Endothelial cell of umbilical vein (primary cell): ENCODE measurements at regions of chr19 and their contacts with region 1.

Region 1: GRCh38 chr19:1269065-1269477 is at the start of gene CIRBP:
- DNase-seq: peak; percentile 99
- H3K4me3 ChIP-seq: peak within 1 kb of the TSS; percentile 61 to 90 (median 76)
- H3K27ac ChIP-seq: peak within 1 kb of the TSS; percentile 93
- H3K4me1 ChIP-seq: peaks cover 38% of the 10 kb centered on the region
- H3K27me3 ChIP-seq: no peaks in the 10 kb centered on the region
- CTCF ChIP-seq: no peak
- POLR2A ChIP-seq: peak; percentile 99
- total RNA-seq, gene CIRBP: 225 and 229 TPM in 2 replicates

Region 2: GRCh38 chr19:1167671-1168571 is 101.2 kb before region 1 on chr19:
- CTCF ChIA-PET with region 1: no interaction called
- POLR2A ChIA-PET with region 1: no interaction called
- dilution Hi-C with region 1: no loop called
- intact Hi-C with region 1: no loop called
- DNase-seq: no peak
- H3K4me3 ChIP-seq: no peak overlapping the region
- H3K27ac ChIP-seq: no peak overlapping the region
- H3K4me1 ChIP-seq: no peaks in the 10 kb centered on the region
- H3K27me3 ChIP-seq: no peaks in the 10 kb centered on the region
- CTCF ChIP-seq: no peak
- POLR2A ChIP-seq: no peak

Region 3: DNA sequence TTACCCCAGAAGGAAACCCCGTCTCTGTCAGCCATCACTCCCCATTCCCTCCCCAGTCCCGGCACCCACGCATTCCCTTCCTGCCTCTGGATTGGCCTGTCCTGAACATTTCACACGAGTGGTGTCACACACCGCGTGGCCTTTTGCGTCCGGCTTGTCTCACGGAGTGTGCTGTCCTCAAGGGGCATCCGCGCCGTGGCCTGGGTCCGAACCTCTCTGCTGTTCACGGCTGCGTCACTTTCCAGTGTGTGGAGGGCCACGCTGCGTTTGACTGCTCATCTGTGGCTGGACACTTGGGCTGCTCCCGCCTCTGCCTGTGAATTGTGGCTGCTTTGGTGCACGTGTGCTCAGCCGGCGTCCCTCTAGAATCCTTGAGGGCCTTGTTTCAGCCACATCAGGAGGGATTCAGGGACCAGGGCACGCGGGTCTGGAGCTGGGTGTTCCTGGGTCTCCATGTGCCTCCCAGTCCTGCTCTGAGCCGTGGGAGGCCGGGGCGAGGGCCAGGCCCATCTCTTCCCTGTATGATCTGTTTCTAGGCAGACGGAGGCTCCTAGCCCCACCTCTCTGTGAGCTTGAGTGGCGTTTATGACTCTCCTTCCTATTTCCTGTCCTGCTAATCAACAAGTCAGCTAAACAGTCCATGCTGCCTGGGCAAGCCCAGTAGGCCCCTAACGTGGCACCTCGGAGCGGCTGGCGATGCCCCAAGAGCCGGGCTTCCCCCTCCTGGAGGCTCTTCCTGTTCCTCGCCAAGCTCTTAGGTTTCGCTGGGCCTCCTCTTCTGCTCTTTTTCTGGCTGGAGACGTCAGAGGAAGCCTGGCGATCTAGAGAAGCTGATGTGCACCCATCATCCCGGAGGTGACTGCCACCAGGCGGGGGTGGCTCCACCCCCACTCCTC is 55.4 kb before region 1 on chr19:
- CTCF ChIA-PET with region 1: interaction called, 8 read pairs
- POLR2A ChIA-PET with region 1: interaction called, 10 read pairs
- dilution Hi-C with region 1: no loop called
- intact Hi-C with region 1: no loop called
- DNase-seq: peak; percentile 96
- H3K4me3 ChIP-seq: no peak overlapping the region
- H3K27ac ChIP-seq: peak overlapping the region; percentile 48
- H3K4me1 ChIP-seq: peaks cover 31% of the 10 kb centered on the region
- H3K27me3 ChIP-seq: no peaks in the 10 kb centered on the region
- CTCF ChIP-seq: no peak
- POLR2A ChIP-seq: peak; percentile 27

Region 4: GRCh38 chr19:1223018-1223855 is 45.8 kb before region 1 on chr19:
- CTCF ChIA-PET with region 1: no interaction called
- POLR2A ChIA-PET with region 1: no interaction called
- dilution Hi-C with region 1: no loop called
- intact Hi-C with region 1: loop called (anchors 1 kb)
- DNase-seq: no peak
- H3K4me3 ChIP-seq: no peak overlapping the region
- H3K27ac ChIP-seq: no peak overlapping the region
- H3K4me1 ChIP-seq: no peaks in the 10 kb centered on the region
- H3K27me3 ChIP-seq: no peaks in the 10 kb centered on the region
- CTCF ChIP-seq: peak; percentile 52 to 55
- POLR2A ChIP-seq: no peak

Region 5: DNA sequence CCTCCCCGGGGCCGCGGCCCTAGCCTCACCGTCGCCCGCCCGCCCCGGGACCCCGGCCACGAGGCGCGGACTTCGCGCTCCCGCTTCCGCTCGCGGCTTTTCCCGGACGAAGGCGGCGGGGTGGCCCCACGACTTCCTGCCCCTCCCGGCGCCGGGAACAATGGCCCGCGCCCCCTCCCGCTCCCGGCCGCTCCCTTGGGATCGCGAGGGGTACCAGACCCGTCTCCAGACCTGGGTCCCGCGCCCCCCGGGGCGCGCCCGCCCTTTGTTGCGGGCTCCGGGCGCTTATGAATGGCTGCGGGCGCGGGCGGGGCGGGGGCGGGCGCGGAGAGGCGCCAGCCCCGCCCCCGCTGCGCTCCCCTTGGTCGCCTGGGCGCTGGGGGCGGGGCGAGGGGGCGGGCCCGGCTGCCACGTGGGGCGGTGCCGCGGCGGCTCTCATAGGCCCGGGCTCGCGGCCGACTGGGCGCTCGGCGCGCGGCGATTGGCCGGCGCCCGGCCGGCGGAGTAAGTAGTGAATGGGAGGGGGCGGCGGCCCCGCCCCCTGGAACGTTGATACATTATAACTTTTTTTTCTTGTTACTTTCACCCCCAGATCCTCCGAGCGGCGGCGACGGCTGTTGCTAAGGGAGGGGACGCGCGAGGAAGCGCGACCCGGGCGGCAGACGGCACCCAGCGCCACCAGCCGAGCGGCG is 19.6 kb before region 1 on chr19:
- CTCF ChIA-PET with region 1: interaction called, 1,001 read pairs
- POLR2A ChIA-PET with region 1: interaction called, 87 read pairs
- dilution Hi-C with region 1: no loop called
- intact Hi-C with region 1: loop called (anchors 1 kb)
- DNase-seq: peak; percentile 94
- H3K4me3 ChIP-seq: peak overlapping the region; percentile 57 to 85 (median 71)
- H3K27ac ChIP-seq: peak overlapping the region; percentile 99
- H3K4me1 ChIP-seq: peaks cover 24% of the 10 kb centered on the region
- H3K27me3 ChIP-seq: no peaks in the 10 kb centered on the region
- CTCF ChIP-seq: no peak
- POLR2A ChIP-seq: peak; percentile 78

Region 6: GRCh38 chr19:1255547-1256227 is 13.4 kb before region 1 on chr19:
- CTCF ChIA-PET with region 1: interaction called, 89 read pairs
- POLR2A ChIA-PET with region 1: interaction called, 34 read pairs
- dilution Hi-C with region 1: no loop called
- intact Hi-C with region 1: no loop called
- DNase-seq: no peak
- H3K4me3 ChIP-seq: no peak overlapping the region
- H3K27ac ChIP-seq: no peak overlapping the region
- H3K4me1 ChIP-seq: peaks cover 49% of the 10 kb centered on the region
- H3K27me3 ChIP-seq: no peaks in the 10 kb centered on the region
- CTCF ChIP-seq: no peak
- POLR2A ChIP-seq: no peak

Region 7: DNA sequence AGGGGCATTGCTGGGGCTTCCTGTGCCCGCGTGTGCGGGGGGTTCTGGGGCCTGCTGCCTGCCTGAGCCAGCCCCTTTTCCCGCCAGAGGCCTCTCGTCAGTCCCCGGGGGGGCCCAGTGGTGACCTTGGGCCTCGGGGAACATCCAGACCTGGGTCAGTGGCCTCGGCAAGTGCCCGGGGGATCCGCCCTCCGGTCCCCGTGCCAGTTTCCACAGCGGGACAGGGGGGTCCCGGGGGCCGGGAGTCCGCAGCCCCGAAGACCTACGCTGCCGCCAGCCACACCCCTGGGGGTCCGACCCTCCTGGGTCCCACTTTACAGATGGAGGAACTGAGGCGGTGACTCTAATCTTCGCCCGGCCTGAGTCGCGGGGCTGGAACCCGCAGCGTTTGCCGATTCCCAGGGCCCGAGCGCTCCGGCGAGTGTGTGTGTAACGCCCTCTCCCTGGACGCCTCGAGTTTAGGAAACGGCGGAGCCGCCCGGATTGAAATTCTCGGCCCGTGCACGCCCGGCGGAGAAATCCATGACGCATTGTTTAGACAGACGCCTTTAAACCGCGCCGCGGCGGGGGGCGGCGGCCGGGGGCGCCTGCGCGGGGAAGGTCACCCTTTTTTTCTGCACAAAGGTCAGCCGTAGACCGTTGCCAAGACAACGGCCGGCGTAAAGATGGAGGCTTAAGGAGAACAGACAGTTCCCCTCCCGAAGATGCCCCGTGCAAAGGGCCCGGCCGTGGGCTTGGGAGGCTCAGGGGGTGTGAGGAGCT is 55.9 kb after region 1 on chr19:
- CTCF ChIA-PET with region 1: no interaction called
- POLR2A ChIA-PET with region 1: no interaction called
- dilution Hi-C with region 1: no loop called
- intact Hi-C with region 1: no loop called
- DNase-seq: peak; percentile 59
- H3K4me3 ChIP-seq: peak overlapping the region in 2 of 3 experiments; percentile 3 to 15
- H3K27ac ChIP-seq: no peak overlapping the region
- H3K4me1 ChIP-seq: peaks cover 8% of the 10 kb centered on the region
- H3K27me3 ChIP-seq: no peaks in the 10 kb centered on the region
- CTCF ChIP-seq: no peak
- POLR2A ChIP-seq: no peak

Region 8: GRCh38 chr19:1438035-1438932 is 169.2 kb after region 1 on chr19 and contains the start of gene RPS15:
- CTCF ChIA-PET with region 1: no interaction called
- POLR2A ChIA-PET with region 1: interaction called, 10 read pairs
- dilution Hi-C with region 1: no loop called
- intact Hi-C with region 1: no loop called
- DNase-seq: peak; percentile 98
- H3K4me3 ChIP-seq: peak within 1 kb of the TSS; percentile 75 to 89 (median 85)
- H3K27ac ChIP-seq: peak within 1 kb of the TSS; percentile 89
- H3K4me1 ChIP-seq: peaks cover 6% of the 10 kb centered on the region
- H3K27me3 ChIP-seq: no peaks in the 10 kb centered on the region
- CTCF ChIP-seq: peak; percentile 96 to 98
- POLR2A ChIP-seq: peak; percentile 99
- total RNA-seq, gene RPS15: 1,260 and 1,287 TPM in 2 replicates